ENCODE measurements at regions of chr9 and their contacts with region 1.

Region 1: GRCh38 chr9:125700791-125701190 is 6.2 kb downstream of the MAPKAP1 start:
- DNase-seq: peak; percentile 70
- ATAC-seq: peak; percentile 91
- H3K4me3 Mint-ChIP-seq: no peak overlapping the region
- H3K27ac Mint-ChIP-seq: no peak overlapping the region
- H3K4me1 Mint-ChIP-seq: peaks cover 65% of the 10 kb centered on the region
- H3K27me3 Mint-ChIP-seq: no peaks in the 10 kb centered on the region

Region 2: GRCh38 chr9:125663127-125663526 is 37.7 kb before region 1 on chr9:
- CTCF ChIA-PET with region 1: no interaction called
- POLR2A ChIA-PET with region 1: interaction called, 3 read pairs
- intact Hi-C with region 1: loop called in 1 of 2 experiments (anchors 2 kb)
- DNase-seq: no peak
- ATAC-seq: peak; percentile 80
- H3K4me3 Mint-ChIP-seq: no peak overlapping the region
- H3K27ac Mint-ChIP-seq: peak overlapping the region; percentile 39
- H3K4me1 Mint-ChIP-seq: peaks cover 11% of the 10 kb centered on the region
- H3K27me3 Mint-ChIP-seq: no peaks in the 10 kb centered on the region